HAP-1 (cell line): ENCODE measurements at regions of chr14 and their contacts with region 1.

Region 1: GRCh38 chr14:37583359-37584231 is 11.5 kb downstream of the FOXA1 start:
- DNase-seq: peak; percentile 73 to 79
- H3K4me3 ChIP-seq: peak overlapping the region; percentile 27
- H3K4me1 ChIP-seq: peaks cover 32% of the 10 kb centered on the region
- H3K27me3 ChIP-seq: no peaks in the 10 kb centered on the region

Region 2: DNA sequence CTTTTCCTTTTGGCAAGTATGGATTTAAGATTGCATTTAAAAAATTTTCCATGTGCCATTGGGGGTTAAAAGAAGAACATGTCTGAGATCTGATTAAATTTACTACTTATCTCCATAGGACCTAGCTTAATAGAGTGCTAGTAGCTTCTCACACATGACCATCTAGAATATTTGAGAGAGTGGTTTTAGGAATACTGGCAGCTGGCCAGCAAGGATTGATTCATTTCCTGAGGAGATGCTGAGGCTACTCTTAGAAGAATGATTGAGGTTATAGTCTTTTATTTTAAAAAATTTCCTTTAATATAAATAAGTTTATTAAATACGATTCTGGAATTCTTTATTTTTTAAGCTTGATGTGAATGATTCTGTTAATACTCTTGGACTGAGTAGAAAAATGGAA is 329.7 kb before region 1 on chr14:
- in situ Hi-C with region 1: loop called (anchors 10 kb)
- DNase-seq: no peak
- H3K4me3 ChIP-seq: no peak overlapping the region
- H3K4me1 ChIP-seq: no peaks in the 10 kb centered on the region
- H3K27me3 ChIP-seq: peaks cover 2% of the 10 kb centered on the region; the same call in 1 of the 2 replicates

Region 3: GRCh38 chr14:37417833-37418232 is 165.8 kb before region 1 on chr14:
- in situ Hi-C with region 1: no loop called
- DNase-seq: no peak
- H3K4me3 ChIP-seq: no peak overlapping the region
- H3K4me1 ChIP-seq: no peaks in the 10 kb centered on the region
- H3K27me3 ChIP-seq: no peaks in the 10 kb centered on the region